ENCODE measurements at regions of chr9 and their contacts with region 1.

Region 1: DNA sequence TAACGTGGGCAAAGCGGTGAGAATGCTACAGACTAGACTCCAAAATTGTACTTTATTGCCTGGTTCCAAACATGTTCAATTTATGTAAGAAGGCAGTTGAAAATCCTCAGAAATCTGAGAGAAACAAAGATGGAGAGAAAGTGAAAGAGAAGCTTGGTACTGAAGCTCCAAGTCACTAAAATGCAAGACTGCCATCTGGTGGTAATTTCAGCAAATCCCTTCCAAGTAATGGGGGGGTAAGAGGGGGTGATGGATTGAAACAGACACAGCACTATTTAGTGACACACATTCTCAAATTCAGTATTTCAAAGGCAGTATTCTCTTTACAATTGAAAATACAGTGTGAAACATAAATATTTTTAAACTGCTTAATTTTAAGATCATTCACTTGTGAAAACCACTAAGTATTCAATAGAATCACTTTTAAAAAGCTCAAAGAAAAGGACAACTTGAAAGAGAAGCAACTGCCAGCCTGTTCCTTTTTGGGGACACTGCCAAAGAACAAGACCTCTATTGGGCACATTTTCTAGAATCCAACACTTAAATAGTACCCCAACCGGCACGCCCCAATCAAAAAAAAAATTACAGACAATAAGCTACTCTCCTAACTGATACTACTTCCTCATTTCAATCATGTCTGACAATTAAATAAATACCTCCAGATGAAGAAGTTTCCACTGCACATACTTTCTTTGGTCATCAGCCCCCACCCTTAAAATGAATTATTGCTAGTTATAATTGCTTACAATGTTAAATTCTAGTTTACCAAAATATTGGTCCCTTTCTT is 131.5 kb downstream of the AGTPBP1 start:
- DNase-seq: peak; percentile 28
- H3K4me3 Mint-ChIP-seq: peak overlapping the region; percentile 49
- H3K27ac Mint-ChIP-seq: peak overlapping the region; percentile 57
- H3K4me1 Mint-ChIP-seq: peaks cover 6% of the 10 kb centered on the region
- H3K27me3 Mint-ChIP-seq: no peaks in the 10 kb centered on the region

Region 2: GRCh38 chr9:84397151-84397728 is 1213.0 kb before region 1 on chr9:
- CTCF ChIA-PET with region 1: interaction called, 20 read pairs
- POLR2A ChIA-PET with region 1: no interaction called
- DNase-seq: peak; percentile 67
- H3K4me3 Mint-ChIP-seq: no peak overlapping the region
- H3K27ac Mint-ChIP-seq: no peak overlapping the region
- H3K4me1 Mint-ChIP-seq: no peaks in the 10 kb centered on the region
- H3K27me3 Mint-ChIP-seq: peaks cover 4% of the 10 kb centered on the region

Region 3: DNA sequence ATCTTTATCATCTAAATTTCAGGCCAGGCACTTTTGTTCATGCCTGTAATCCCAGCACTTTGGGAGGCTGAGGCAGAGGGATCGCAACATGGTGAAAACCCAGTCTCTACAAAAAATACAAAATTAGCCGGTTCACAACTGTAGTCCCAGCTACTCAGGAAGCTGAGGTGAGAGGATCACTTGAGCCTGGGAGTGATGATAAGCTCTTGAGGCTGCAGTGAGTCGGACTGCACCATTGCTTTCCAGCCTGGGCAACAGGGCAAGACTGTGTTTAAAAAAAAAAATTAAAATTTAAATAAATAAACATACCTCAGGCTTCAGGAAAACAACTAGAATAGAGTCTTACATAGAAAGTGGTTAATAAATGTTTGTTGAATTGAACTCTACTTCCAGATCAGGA is 16.0 kb before region 1 on chr9:
- CTCF ChIA-PET with region 1: interaction called, 10 read pairs
- POLR2A ChIA-PET with region 1: no interaction called
- DNase-seq: no peak
- H3K4me3 Mint-ChIP-seq: no peak overlapping the region
- H3K27ac Mint-ChIP-seq: no peak overlapping the region
- H3K4me1 Mint-ChIP-seq: peaks cover 4% of the 10 kb centered on the region
- H3K27me3 Mint-ChIP-seq: no peaks in the 10 kb centered on the region

Region 4: DNA sequence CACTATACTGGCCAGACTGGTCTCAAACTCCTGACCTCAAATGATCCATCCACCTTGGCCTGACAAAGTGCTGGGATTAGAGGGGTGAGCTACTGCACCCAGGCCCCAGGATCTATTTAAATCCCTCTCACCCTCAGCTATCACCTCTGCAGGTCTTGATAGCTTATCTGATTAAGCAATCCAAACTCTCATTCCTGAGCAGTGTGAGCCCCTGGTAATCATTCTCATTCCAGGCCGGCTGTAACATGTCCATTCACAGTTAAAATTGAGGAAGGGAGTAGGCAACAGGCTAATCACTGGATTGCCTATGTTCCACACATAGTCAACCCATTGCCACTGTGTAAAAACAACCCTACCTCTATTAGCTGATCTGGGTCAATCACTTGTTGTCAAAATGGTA is 20.4 kb after region 1 on chr9:
- CTCF ChIA-PET with region 1: interaction called, 10 read pairs
- POLR2A ChIA-PET with region 1: no interaction called
- DNase-seq: no peak
- H3K4me3 Mint-ChIP-seq: no peak overlapping the region
- H3K27ac Mint-ChIP-seq: no peak overlapping the region
- H3K4me1 Mint-ChIP-seq: no peaks in the 10 kb centered on the region
- H3K27me3 Mint-ChIP-seq: no peaks in the 10 kb centered on the region

Region 5: DNA sequence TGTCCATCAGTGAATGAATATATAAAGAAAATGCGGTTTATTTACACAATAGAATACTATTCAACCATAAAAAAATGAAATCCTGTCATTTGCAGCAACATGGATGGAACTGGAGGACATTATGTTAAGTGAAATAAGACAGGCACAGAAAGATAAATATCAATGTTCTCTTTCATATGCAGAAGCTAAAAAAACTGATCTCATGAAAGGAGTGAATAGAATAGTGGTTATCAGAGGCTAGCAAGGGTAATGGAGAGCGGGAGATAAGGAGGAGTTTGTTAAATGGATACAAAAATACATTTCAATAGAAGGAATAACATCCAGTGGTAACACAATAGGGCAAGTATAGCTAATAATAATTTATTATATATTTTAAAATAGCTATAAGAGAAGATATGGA is 66.5 kb after region 1 on chr9:
- CTCF ChIA-PET with region 1: no interaction called
- POLR2A ChIA-PET with region 1: no interaction called
- DNase-seq: no peak
- H3K4me3 Mint-ChIP-seq: no peak overlapping the region
- H3K27ac Mint-ChIP-seq: no peak overlapping the region
- H3K4me1 Mint-ChIP-seq: no peaks in the 10 kb centered on the region
- H3K27me3 Mint-ChIP-seq: no peaks in the 10 kb centered on the region